Upper lobe of right lung (tissue), 1 donor: ENCODE measurements at regions of chr3 and their contacts with region 1.

Region 1: DNA sequence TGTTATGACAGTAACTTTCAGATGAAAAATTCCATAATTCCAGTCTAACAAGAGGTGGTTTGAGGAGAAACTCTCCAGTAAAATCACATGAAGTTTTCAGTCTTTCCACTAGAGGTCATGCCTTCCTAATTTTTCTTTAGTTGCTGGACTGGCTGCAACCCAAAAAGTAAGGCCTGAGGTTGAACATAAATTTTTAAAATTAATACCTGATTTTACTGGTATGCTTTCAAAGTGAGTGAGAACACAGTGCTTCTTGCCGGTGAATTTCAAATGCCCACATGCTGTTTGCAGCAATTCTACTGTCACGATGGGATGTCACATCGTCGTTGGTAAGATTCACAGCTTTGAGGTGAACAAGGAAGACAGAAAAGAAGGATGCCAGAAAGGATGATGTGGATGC is 89.0 kb upstream of the FGF12 start:
- DNase-seq: no peak
- ATAC-seq: peak; percentile 60
- H3K4me3 ChIP-seq: no peak overlapping the region
- H3K27ac ChIP-seq: no peak overlapping the region
- H3K4me1 ChIP-seq: peaks cover 10% of the 10 kb centered on the region
- H3K27me3 ChIP-seq: no peaks in the 10 kb centered on the region
- CTCF ChIP-seq: peak; percentile 72

Region 2: GRCh38 chr3:192409357-192409824 is 407.0 kb before region 1 on chr3:
- intact Hi-C with region 1: no loop called
- DNase-seq: peak; percentile 65
- ATAC-seq: peak; percentile 77
- H3K4me3 ChIP-seq: peak overlapping the region; percentile 45
- H3K27ac ChIP-seq: peak overlapping the region; percentile 51
- H3K4me1 ChIP-seq: no peaks in the 10 kb centered on the region
- H3K27me3 ChIP-seq: peaks cover 34% of the 10 kb centered on the region
- CTCF ChIP-seq: no peak

Region 3: DNA sequence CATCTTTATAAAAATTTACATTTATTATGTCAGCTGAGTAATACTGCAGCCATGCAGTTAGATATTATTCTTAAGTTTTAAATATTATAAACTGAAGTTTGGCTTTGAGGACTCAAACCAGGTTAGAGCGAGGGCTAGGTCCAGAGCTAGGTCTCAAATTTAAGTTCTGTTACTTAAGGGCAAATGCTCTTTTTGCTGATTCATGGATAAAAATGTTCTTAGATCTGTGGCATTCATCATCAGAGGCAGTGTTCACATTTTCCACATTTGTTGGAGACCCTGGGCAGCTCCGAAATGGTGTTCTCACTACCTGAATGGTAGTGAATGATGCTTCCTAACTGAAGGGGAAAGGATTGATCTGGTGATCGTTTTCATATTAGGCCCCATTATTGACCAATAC is 222.7 kb after region 1 on chr3:
- intact Hi-C with region 1: loop called (anchors 5 kb)
- DNase-seq: no peak
- ATAC-seq: no peak
- H3K4me3 ChIP-seq: no peak overlapping the region
- H3K27ac ChIP-seq: no peak overlapping the region
- H3K4me1 ChIP-seq: no peaks in the 10 kb centered on the region
- H3K27me3 ChIP-seq: no peaks in the 10 kb centered on the region
- CTCF ChIP-seq: no peak

Region 4: DNA sequence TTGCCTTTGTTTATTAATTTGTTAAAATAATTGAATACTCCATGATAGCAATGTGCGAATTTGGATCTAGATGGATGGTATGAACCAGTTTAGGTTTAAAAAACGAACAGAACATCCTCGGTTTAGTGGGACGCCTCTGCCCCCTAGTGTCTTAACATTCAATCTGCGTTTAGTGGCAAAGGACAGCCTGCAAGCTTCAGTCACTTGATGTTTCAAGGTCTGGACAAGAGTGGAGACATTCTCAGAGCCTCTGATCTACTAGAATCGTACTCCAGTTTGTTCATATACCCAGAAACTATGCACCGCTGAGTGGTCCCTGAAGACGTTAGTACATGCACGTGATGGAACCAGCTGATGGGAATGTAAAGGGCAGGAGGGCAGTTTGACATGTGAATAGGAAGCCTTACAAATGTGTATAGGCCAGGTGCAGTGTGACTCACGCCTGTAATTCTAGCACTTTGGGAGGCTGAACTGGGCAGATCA is 756.1 kb after region 1 on chr3:
- intact Hi-C with region 1: loop called (anchors 10 kb)
- DNase-seq: no peak
- ATAC-seq: peak; percentile 93
- H3K4me3 ChIP-seq: no peak overlapping the region
- H3K27ac ChIP-seq: no peak overlapping the region
- H3K4me1 ChIP-seq: no peaks in the 10 kb centered on the region
- H3K27me3 ChIP-seq: no peaks in the 10 kb centered on the region
- CTCF ChIP-seq: peak; percentile 79